Heart right ventricle (tissue), 16 donors: ENCODE measurements at regions of chr1 and their contacts with region 1.

Region 1: GRCh38 chr1:54287176-54287650 is 87.2 kb downstream of the MRPL37 start:
- DNase-seq: peak; percentile 72 to 82
- ATAC-seq: peak; percentile 67 to 93 (median 90)
- H3K4me3 ChIP-seq: no peak overlapping the region
- H3K27ac ChIP-seq: peak overlapping the region; percentile 56 to 84 (median 79)
- H3K4me1 ChIP-seq: peaks cover 28 to 89% (median 72%) of the 10 kb centered on the region in 9 donors
- H3K27me3 ChIP-seq: no peaks in the 10 kb centered on the region
- CTCF ChIP-seq: no peak

Region 2: GRCh38 chr1:54199765-54200518 is 87.3 kb before region 1 on chr1 and contains the starts of genes CYB5RL and MRPL37:
- intact Hi-C with region 1: loop called in 1 of 10 experiments (anchors 5 kb)
- DNase-seq: peak; percentile 85 to 98
- ATAC-seq: peak; percentile 97 to 100 (median 99)
- H3K4me3 ChIP-seq: peak within 1 kb of the TSS; percentile 68 to 100 (median 84)
- H3K27ac ChIP-seq: peak within 1 kb of the TSS in 9 of 10 donors; percentile 60 to 90 (median 81)
- H3K4me1 ChIP-seq: peaks cover 6 to 32% (median 20%) of the 10 kb centered on the region in 9 donors
- H3K27me3 ChIP-seq: no peaks in the 10 kb centered on the region
- CTCF ChIP-seq: no peak
- total RNA-seq, gene CYB5RL: 3.2 to 8.3 (median 5.8) TPM
- total RNA-seq, gene MRPL37: 82.2 to 97.4 (median 90.2) TPM